Dorsolateral prefrontal cortex (tissue), 120 donors: ENCODE measurements at regions of chr1 and their contacts with region 1.

Region 1: DNA sequence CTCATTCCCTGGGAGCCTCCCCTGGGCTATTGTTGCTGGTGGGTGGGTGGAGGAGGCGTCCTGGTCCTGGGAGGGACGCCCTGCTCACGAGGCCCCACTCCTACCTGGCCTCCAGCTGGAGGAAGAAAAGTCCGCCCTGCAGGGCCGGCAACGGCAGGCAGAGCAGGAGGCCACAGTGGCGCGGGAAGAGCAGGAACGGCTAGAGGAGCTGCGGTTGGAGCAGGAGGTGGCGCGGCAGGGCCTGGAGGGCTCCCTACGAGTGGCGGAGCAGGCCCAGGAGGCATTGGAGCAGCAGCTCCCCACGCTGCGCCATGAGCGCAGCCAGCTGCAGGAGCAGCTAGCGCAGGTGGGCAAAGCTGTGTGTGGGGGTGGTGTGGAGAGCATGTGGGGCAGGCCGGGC is 24.9 kb downstream of the CROCC start:
- DNase-seq: no peak
- H3K4me3 ChIP-seq: no peak overlapping the region
- H3K27ac ChIP-seq: peak overlapping the region in 1 of 59 donors; percentile 22
- H3K27me3 ChIP-seq: no peaks in the 10 kb centered on the region
- CTCF ChIP-seq: no peak

Region 2: DNA sequence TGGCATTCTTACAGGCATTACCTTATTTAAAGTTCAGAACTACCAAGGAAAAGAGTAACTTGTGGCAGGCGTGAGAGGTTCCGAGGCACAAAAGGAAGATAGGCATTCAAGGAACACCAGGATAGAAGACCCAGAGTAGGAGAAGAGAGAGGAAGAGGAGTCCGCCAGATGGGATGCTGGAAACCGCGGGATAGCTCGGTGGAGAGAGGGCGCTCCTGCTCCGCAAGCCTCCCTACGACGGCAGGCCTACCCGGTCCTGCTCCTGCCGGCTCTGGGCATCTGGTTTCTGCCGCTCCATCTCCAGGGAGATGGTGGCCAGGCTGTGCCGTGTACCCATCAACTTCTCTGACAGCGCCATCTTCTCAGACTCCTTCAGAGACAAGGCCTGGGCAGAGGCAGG is 327.9 kb before region 1 on chr1:
- intact Hi-C with region 1: loop called (anchors 1 kb)
- DNase-seq: peak in 6 of 10 donors; percentile 30 to 81 (median 46)
- H3K4me3 ChIP-seq: peak overlapping the region in 19 of 59 donors; percentile 0 to 35 (median 12)
- H3K27ac ChIP-seq: peak overlapping the region in 31 of 59 donors; percentile 0 to 69 (median 22)
- H3K27me3 ChIP-seq: no peaks in the 10 kb centered on the region
- CTCF ChIP-seq: peak in 10 of 56 donors; percentile 4 to 55 (median 21)

Region 3: GRCh38 chr1:16921391-16922185 is 25.1 kb before region 1 on chr1 and contains the start of gene CROCC:
- intact Hi-C with region 1: no loop called
- DNase-seq: peak in 1 of 10 donors; percentile 50
- H3K4me3 ChIP-seq: peak within 1 kb of the TSS in 23 of 59 donors; percentile 1 to 45 (median 15)
- H3K27ac ChIP-seq: peak within 1 kb of the TSS in 3 of 59 donors; percentile 19 to 43 (median 19)
- H3K27me3 ChIP-seq: no peaks in the 10 kb centered on the region
- CTCF ChIP-seq: no peak
- total RNA-seq, gene CROCC: 15.4 to 63.7 (median 32.6) TPM

Region 4: DNA sequence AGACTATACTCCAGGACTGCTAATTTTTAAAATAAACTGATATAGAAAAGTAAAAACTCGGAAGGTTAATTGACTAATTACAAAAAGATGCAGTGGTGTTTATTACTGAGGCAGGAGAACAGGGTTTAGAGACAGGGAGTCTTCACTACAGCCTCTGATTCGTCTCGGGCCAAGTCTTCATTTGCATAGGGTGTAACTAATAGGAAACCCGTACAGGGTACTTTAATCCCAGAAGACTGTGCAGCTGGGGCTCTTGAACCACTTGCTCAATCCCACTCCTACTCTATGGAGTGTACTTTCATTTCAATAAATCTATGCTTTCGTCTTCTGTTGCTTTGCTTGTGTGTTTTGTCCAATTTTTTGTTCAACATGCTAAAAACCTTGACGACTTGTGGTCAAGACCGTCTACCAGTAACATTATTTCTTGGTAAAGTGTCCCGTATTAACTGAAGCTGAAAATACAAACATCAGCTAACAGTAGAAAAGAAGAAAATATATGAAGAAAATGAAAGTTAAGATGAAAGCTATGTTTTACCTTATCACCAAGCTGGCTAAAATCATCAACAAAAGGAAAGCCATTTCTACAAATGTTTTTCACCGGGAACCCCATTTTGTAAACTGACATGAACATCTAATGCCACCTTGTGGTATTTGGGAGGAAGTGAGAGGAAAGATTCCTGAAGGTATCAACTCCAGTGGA is 99.1 kb after region 1 on chr1:
- intact Hi-C with region 1: loop called (anchors 1 kb)
- DNase-seq: peak in 1 of 10 donors; percentile 32
- H3K4me3 ChIP-seq: peak overlapping the region in 45 of 59 donors; percentile 2 to 51 (median 33)
- H3K27ac ChIP-seq: peak overlapping the region in 29 of 59 donors; percentile 3 to 74 (median 34)
- H3K27me3 ChIP-seq: no peaks in the 10 kb centered on the region
- CTCF ChIP-seq: peak; percentile 65 to 95 (median 85)

Region 5: DNA sequence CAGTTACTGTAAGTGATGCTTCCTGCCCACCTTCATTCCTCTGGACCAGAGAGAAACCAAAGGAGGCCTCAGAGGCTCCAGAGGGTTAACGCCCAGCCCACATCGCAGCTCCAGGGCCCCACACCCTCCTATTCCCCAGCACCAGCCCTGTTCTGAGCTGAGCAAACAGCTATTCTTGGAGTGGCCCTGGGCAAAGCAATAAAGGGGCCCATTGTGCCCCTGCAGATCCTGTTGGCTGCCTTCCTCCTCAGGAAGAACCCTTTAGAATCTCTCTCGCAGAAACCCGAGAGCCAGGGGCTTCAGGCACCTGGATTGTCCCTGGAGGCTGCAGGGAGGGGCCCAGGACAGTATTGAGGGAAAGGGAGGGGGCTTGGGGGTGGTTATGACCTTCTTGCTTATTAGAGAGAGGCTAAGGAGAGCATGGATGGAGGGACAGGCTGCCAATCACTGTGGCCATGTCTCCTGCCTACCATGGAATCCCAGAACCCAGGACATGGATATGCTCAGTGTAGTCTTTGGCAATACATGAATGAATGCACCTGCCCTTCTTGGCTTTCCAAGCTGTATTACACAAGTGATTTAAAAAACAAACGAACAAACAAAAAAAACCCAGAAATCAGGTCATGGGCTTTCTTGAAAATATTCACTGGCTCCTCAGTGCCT is 163.4 kb after region 1 on chr1:
- intact Hi-C with region 1: no loop called
- DNase-seq: peak in 9 of 10 donors; percentile 58 to 88 (median 81)
- H3K4me3 ChIP-seq: peak overlapping the region in 12 of 59 donors; percentile 2 to 17 (median 8)
- H3K27ac ChIP-seq: peak overlapping the region; percentile 41 to 99 (median 93)
- H3K27me3 ChIP-seq: no peaks in the 10 kb centered on the region
- CTCF ChIP-seq: peak in 5 of 56 donors; percentile 7 to 22 (median 11)